ENCODE measurements at regions of chr19 and their contacts with region 1.

Region 1: DNA sequence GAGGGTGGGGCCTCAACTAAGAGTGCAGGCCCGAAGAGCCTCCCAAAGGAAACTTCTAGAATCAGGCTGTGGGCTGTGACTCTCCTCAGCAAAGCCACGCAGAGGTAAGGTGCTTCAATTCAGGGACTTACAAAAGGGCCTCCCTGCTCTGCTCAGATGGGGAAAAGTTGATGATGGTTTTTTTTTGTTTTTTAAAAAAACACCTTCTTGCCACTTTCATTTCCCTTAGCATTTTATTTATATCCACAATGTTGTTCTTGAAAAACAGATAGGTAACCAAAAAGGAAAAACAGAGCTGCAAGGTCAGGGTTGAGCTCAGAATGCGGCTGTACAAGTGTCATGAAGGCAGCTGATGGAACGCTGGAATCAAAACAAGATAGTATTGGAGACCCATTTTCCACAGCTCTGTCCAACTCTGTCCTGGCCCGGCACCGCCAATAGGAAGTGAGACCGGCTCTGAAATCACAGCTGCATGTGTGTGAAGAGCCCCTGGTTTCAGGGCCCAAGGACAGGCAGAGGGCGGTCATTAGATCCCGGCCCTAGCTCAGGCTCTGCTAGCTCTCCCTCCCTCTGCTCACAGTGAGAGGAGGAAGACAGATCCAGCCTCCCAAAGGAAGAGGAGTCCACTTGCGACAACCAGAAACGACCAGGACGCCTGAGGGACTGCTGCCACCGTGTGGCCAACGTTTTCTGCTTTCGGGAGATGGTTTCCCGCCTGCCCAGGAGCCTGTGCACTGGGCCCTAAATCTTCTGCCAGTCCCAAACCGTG is 58.3 kb downstream of the KLF2 start:
- DNase-seq: peak; percentile 56
- ATAC-seq: peak; percentile 87
- H3K4me3 ChIP-seq: no peak overlapping the region
- H3K27ac ChIP-seq: no peak overlapping the region
- H3K4me1 ChIP-seq: no peaks in the 10 kb centered on the region
- H3K27me3 ChIP-seq: no peaks in the 10 kb centered on the region
- CTCF ChIP-seq: peak; percentile 75 to 87 (median 75)
- POLR2A ChIP-seq: no peak
- RAD21 ChIP-seq: peak; percentile 97

Region 2: GRCh38 chr19:16247353-16248182 is 135.4 kb before region 1 on chr19:
- CTCF ChIA-PET with region 1: interaction called, 44 read pairs
- POLR2A ChIA-PET with region 1: interaction called, 4 read pairs
- RAD21 ChIA-PET with region 1: interaction called, 4 to 5 read pairs
- intact Hi-C with region 1: loop called (anchors 1 kb)
- DNase-seq: peak; percentile 68
- ATAC-seq: peak; percentile 100
- H3K4me3 ChIP-seq: no peak overlapping the region
- H3K27ac ChIP-seq: no peak overlapping the region
- H3K4me1 ChIP-seq: peaks cover 0 to 7% of the 10 kb centered on the region in 2 experiments; a peak in 2 of 4 replicates
- H3K27me3 ChIP-seq: no peaks in the 10 kb centered on the region
- CTCF ChIP-seq: peak; percentile 94 to 97 (median 94)
- POLR2A ChIP-seq: no peak
- RAD21 ChIP-seq: peak; percentile 100

Region 3: GRCh38 chr19:16397791-16398471 is 15.0 kb after region 1 on chr19:
- CTCF ChIA-PET with region 1: no interaction called
- POLR2A ChIA-PET with region 1: no interaction called
- RAD21 ChIA-PET with region 1: no interaction called
- intact Hi-C with region 1: no loop called
- DNase-seq: no peak
- ATAC-seq: no peak
- H3K4me3 ChIP-seq: no peak overlapping the region
- H3K27ac ChIP-seq: no peak overlapping the region
- H3K4me1 ChIP-seq: no peaks in the 10 kb centered on the region
- H3K27me3 ChIP-seq: no peaks in the 10 kb centered on the region
- CTCF ChIP-seq: no peak
- POLR2A ChIP-seq: no peak
- RAD21 ChIP-seq: no peak

Measured in HCT116 (cell line).